Esophagus squamous epithelium (tissue), 5 donors: ENCODE measurements at regions of chr9 and their contacts with region 1.

Region 1: GRCh38 chr9:114653556-114654159 is 3.9 kb downstream of the TEX53 start:
- DNase-seq: no peak
- H3K4me3 ChIP-seq: no peak overlapping the region
- H3K27ac ChIP-seq: no peak overlapping the region
- H3K4me1 ChIP-seq: peaks cover 0 to 12% (median 0%) of the 10 kb centered on the region in 3 donors
- H3K27me3 ChIP-seq: no peaks in the 10 kb centered on the region
- CTCF ChIP-seq: peak; percentile 82 to 95 (median 90)
- POLR2A ChIP-seq: no peak

Region 2: DNA sequence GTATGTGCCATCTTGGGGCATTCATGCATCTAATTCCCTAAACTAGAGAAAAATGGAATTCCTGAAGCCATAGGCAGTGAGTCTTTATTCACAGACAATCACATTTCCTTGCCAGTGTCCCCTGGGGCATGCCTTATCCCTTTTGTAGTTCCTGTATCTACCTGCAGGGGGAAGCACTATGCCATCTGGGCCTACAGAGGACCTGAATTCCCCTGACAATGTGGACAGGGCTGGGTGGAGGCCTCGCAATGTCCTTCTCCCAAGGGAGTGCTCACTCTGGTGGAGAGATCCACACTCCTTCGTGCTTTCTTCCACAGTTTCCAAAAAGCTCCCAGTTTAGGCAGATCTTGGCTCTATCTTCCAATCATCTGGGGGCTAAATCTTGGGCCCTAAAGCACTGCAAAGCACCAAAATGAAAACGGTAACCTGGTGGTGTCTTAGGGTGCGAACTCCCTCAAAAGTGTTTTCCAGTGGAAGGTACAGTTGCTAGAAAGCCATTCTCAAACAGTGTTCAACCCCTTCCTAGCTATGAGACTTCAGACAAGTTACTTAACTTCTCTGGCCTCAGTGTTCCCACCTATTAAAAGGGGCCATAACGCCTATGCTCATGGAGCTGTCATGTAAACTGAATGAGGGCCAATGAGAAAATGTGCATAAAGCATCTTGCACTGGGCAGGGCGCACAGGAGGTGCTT is 165.9 kb before region 1 on chr9:
- intact Hi-C with region 1: loop called (anchors 5 kb)
- DNase-seq: no peak
- H3K4me3 ChIP-seq: no peak overlapping the region
- H3K27ac ChIP-seq: no peak overlapping the region
- H3K4me1 ChIP-seq: peaks cover 7 to 31% (median 10%) of the 10 kb centered on the region in 3 donors
- H3K27me3 ChIP-seq: no peaks in the 10 kb centered on the region
- CTCF ChIP-seq: peak in 5 of 6 experiments; percentile 74 to 87 (median 85)
- POLR2A ChIP-seq: no peak

Region 3: GRCh38 chr9:114504341-114505186 is 149.1 kb before region 1 on chr9:
- intact Hi-C with region 1: no loop called
- DNase-seq: no peak
- H3K4me3 ChIP-seq: peak overlapping the region; percentile 62 to 86 (median 68)
- H3K27ac ChIP-seq: peak overlapping the region; percentile 76 to 87 (median 84)
- H3K4me1 ChIP-seq: peaks cover 14 to 62% (median 15%) of the 10 kb centered on the region in 3 donors
- H3K27me3 ChIP-seq: peaks cover 0 to 45% (median 0%) of the 10 kb centered on the region in 4 donors
- CTCF ChIP-seq: peak in 5 of 6 experiments; percentile 14 to 58 (median 35)
- POLR2A ChIP-seq: no peak

Region 4: DNA sequence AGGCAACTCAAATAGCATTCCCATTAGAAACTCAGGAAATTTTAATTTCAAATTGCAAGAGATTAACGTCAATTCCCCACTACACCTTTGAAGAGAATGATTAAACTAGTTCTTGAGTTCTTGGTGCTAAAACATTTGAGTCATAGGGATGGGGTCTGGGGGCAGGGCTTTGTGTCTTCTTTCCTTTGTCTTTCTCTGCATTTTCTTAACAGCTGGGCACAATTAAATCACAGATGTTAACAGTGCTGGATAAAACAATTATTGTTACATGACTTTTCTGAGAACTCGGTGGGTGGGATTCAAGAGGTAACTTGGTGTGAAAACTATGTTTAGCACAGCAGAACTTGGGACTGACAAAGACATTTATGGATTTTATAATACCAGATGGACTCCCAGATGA is 816.2 kb after region 1 on chr9:
- intact Hi-C with region 1: no loop called
- DNase-seq: no peak
- H3K4me3 ChIP-seq: no peak overlapping the region
- H3K27ac ChIP-seq: no peak overlapping the region
- H3K4me1 ChIP-seq: no peaks in the 10 kb centered on the region
- H3K27me3 ChIP-seq: no peaks in the 10 kb centered on the region
- CTCF ChIP-seq: no peak
- POLR2A ChIP-seq: no peak